Mammary epithelial cell (primary cell): ENCODE measurements at regions of chr11 and their contacts with region 1.

Region 1: GRCh38 chr11:60831143-60831500 is 10.8 kb upstream of the CCDC86 start:
- DNase-seq: peak; percentile 72
- H3K4me3 ChIP-seq: peak overlapping the region in 1 of 3 experiments; percentile 24
- H3K27ac ChIP-seq: no peak overlapping the region
- H3K4me1 ChIP-seq: peaks cover 23% of the 10 kb centered on the region
- H3K27me3 ChIP-seq: peaks cover 4% of the 10 kb centered on the region
- CTCF ChIP-seq: peak; percentile 95 to 97

Region 2: DNA sequence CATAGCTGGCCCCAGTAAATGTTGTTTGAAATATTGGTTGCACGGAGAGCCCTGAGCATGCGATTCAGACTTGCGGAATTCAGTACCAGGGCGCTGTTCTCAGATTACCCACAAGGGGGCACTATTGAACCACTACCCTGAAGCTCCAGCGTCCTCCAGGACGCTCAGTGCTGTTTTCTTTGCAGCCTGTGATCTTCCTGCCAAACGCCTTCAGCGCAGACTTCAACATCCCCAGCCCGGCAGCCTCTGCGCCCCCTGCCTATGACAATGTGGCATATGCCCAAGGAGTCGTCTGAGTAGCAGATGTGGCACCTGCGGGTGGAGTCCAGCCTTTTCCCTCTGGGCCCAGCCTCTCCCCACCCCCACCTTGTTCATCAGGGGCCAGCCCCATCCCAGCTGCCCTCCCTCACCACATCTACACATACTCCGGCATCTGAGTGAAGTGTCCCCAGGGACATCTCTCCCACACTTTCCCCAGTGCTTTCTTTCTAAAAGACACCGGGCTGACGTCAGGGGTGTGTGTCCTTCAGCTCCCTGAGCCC is 55.6 kb before region 1 on chr11:
- CTCF ChIA-PET with region 1: no interaction called
- dilution Hi-C with region 1: loop called (anchors 5 kb)
- in situ Hi-C with region 1: no loop called
- intact Hi-C with region 1: loop called (anchors 1 kb)
- DNase-seq: peak; percentile 74
- H3K4me3 ChIP-seq: no peak overlapping the region
- H3K27ac ChIP-seq: no peak overlapping the region
- H3K4me1 ChIP-seq: no peaks in the 10 kb centered on the region
- H3K27me3 ChIP-seq: no peaks in the 10 kb centered on the region
- CTCF ChIP-seq: peak; percentile 89 to 93

Region 3: DNA sequence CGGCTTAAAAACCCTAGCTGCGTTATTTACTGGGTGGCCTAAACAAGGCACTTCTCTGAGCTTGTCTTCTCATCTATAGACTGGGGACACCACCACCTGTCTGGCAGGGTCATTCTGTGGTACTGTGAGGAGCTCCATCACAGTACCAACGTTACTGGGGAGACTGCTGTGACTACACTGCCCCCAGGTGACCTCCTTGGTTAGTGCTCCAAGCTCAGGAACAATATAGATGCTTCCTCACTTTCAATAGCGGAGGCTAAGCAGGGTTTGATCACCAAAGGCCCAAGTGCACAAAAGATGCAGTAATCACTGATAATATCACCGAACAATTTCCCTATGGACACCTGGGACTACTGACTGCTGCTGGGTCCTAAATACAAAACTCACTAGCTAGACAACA is 56.4 kb after region 1 on chr11:
- CTCF ChIA-PET with region 1: interaction called, 24 read pairs
- dilution Hi-C with region 1: no loop called
- in situ Hi-C with region 1: loop called in 1 of 2 experiments (anchors 10 kb)
- intact Hi-C with region 1: loop called (anchors 1 kb)
- DNase-seq: peak; percentile 29
- H3K4me3 ChIP-seq: no peak overlapping the region
- H3K27ac ChIP-seq: no peak overlapping the region
- H3K4me1 ChIP-seq: no peaks in the 10 kb centered on the region
- H3K27me3 ChIP-seq: no peaks in the 10 kb centered on the region
- CTCF ChIP-seq: peak; percentile 64 to 67

Region 4: DNA sequence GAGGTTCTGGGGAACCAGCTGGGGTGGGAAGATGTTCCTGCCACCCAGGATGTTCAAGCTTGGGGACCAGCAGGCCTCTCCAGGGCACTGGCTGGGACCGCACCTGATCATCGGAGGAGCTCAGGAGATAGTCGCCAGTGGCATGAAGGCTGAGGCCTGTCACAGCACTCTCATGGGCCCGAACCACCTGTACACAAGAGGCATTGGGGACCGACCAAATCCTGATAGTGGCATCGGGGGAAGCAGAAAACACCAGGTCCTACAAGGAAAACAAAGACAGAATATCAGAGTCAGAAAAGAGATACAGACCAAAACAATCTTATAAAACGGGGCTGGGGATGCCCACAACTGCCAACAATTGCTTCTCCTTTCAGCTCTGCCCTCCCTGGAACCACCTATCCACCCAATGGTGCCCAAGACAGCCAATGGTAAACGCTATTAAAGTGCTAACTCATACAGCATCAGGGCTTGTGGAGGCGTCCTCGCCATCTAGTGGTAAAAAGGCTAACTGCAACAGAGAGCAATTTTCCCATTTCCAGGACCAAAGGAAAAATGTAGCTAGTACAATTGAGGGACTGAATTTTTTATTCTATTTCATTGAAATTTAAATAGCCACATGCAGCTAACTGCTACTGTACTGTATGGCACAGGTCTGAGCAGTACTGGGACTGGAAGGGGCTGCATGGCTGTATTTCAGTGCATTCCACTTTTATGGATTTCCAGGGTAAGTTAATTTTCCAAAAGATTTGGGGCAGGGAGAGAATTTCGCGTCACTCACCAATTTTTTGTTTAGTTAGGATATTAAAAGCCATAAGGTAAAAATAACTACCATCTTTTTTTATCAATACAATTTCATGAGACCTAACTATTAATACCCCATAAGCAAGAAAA is 68.2 kb after region 1 on chr11:
- CTCF ChIA-PET with region 1: interaction called, 4 read pairs
- dilution Hi-C with region 1: no loop called
- in situ Hi-C with region 1: loop called in 1 of 2 experiments (anchors 10 kb)
- intact Hi-C with region 1: loop called (anchors 1 kb)
- DNase-seq: peak; percentile 51
- H3K4me3 ChIP-seq: no peak overlapping the region
- H3K27ac ChIP-seq: no peak overlapping the region
- H3K4me1 ChIP-seq: no peaks in the 10 kb centered on the region
- H3K27me3 ChIP-seq: no peaks in the 10 kb centered on the region
- CTCF ChIP-seq: peak; percentile 94 to 99

Region 5: DNA sequence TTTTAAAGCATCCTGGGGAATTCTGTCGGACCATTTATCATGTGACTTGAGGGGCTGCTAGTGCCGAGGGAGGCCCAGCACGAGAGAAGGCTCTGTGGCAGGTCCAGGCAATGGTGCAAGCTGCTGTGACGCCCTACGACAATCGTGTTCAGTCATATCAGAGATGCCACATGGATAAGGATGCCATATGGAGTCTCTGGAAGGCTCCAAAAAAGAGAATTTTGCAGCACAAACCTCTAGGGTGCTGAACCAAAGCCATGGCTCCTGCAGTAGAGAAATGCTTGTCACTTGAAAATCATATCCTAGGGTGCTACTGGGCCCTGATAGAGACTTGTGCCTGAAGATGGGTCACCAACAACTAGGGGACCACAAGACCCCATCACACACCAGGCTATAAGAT is 133.7 kb after region 1 on chr11:
- CTCF ChIA-PET with region 1: no interaction called
- dilution Hi-C with region 1: no loop called
- in situ Hi-C with region 1: no loop called
- intact Hi-C with region 1: loop called (anchors 10 kb)
- DNase-seq: no peak
- H3K4me3 ChIP-seq: no peak overlapping the region
- H3K27ac ChIP-seq: no peak overlapping the region
- H3K4me1 ChIP-seq: no peaks in the 10 kb centered on the region
- H3K27me3 ChIP-seq: peaks cover 2% of the 10 kb centered on the region
- CTCF ChIP-seq: no peak

Region 6: GRCh38 chr11:61173456-61173855 is 342.3 kb after region 1 on chr11:
- CTCF ChIA-PET with region 1: no interaction called
- dilution Hi-C with region 1: no loop called
- in situ Hi-C with region 1: loop called in 1 of 2 experiments (anchors 25 kb)
- intact Hi-C with region 1: loop called (anchors 5 kb)
- DNase-seq: peak; percentile 12
- H3K4me3 ChIP-seq: no peak overlapping the region
- H3K27ac ChIP-seq: no peak overlapping the region
- H3K4me1 ChIP-seq: no peaks in the 10 kb centered on the region
- H3K27me3 ChIP-seq: no peaks in the 10 kb centered on the region
- CTCF ChIP-seq: peak in 1 of 2 donors; percentile 14